WTC11 (cell line): ENCODE measurements at regions of chr16 and their contacts with region 1.

Region 1: DNA sequence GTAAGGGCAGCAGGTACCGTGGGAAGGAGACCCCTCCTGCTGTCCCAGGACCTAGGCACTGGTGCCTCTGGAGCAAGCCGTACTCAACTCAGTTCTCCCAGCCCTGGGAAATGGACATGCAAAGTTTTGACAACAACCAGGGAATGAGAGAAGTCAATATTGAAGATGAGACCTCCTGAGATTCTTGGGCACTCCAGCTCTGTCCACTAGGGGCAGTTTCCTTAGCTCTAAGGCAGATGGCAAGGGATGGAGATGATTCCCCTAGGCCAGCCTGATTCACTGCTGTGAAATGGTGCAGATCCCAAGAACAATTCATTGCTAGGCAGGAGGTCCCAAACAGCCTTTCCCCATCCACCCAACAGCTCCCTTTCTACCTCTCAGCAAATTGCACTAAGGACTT is 20.6 kb upstream of the SDR42E2 start:
- DNase-seq: peak; percentile 55
- ATAC-seq: peak; percentile 95
- H3K4me3 Mint-ChIP-seq: no peak overlapping the region
- H3K27ac Mint-ChIP-seq: no peak overlapping the region
- H3K4me1 Mint-ChIP-seq: peaks cover 10% of the 10 kb centered on the region; the same call in 1 of the 2 replicates
- H3K27me3 Mint-ChIP-seq: no peaks in the 10 kb centered on the region
- CTCF ChIP-seq: peak; percentile 58

Region 2: DNA sequence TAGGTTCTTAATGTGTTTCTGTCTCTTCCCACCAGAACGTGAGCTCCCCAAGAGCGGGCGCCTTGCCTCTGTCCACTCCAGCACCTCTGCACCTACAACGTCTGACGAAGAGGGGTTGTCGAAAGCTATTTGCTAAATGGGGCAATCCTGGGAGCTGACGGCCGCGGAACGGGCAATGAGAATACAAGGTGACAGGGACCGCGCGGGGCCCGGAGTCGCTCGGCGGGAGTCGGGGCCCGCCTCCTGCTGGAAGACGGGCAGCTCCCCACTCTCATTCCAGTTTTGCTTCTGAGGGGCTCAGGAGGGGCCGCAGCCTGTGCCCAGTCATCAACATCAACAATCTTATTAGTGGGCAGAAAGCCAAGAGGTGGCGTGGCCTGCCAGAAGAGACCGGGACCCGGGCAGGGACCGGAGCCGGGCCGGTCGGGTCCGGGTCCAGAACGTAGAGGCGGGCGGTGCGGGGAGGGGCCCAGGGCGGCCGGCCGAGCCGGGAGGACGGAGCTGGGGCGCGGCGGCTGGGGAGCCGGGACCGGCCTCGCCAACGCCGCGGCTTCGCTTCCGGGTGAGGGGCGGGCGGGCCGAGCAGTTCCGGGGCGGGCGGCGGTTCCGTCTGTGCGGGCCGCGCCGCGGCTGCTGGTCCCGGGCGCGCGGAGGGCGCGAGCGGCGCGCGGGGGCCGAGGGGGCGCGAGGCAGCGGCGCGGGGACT is 134.1 kb before region 1 on chr16 and contains the start of gene MOSMO:
- CTCF ChIA-PET with region 1: interaction called, 14 read pairs
- POLR2A ChIA-PET with region 1: no interaction called
- DNase-seq: peak; percentile 66
- ATAC-seq: peak; percentile 82
- H3K4me3 Mint-ChIP-seq: peak within 1 kb of the TSS; percentile 90
- H3K27ac Mint-ChIP-seq: peak within 1 kb of the TSS; percentile 21; the same call in 1 of the 2 replicates
- H3K4me1 Mint-ChIP-seq: peaks cover 12% of the 10 kb centered on the region
- H3K27me3 Mint-ChIP-seq: peaks cover 13% of the 10 kb centered on the region
- CTCF ChIP-seq: no peak
- total RNA-seq, gene MOSMO: 10.7 to 11.6 TPM (median 10.7 TPM) in 3 replicates

Region 3: DNA sequence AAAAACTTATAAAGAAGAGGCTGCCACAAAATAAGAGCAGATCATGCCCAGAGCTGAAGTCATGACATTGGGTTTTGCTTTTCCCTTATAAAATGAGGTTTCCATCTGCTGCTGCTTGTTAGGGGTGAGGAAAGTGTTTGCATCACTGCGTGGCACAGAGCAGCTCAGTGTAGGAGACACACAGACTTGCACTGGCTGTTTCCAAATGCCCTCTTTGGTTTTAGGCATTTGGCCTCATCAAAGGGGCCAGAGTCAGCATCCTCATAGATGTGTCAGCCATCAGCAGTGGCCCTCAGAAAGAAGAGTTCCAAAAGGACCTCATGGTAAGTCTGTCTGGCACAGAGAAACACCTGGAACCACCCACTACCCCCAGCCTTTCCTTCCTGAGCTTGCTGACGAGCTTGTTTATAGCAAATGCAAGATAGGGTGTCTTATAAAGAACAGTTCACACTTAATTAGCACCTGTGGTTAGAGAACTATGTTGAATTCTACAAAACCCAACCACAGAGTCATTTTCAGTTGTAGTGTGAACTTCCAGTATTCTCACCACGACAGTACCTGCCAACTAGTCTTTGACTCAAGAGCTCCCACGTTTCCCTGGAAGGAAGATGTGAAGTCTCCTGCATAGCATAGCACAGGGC is 32.4 kb before region 1 on chr16:
- CTCF ChIA-PET with region 1: interaction called, 15 read pairs
- POLR2A ChIA-PET with region 1: no interaction called
- DNase-seq: no peak
- ATAC-seq: no peak
- H3K4me3 Mint-ChIP-seq: no peak overlapping the region
- H3K27ac Mint-ChIP-seq: no peak overlapping the region
- H3K4me1 Mint-ChIP-seq: peaks cover 5% of the 10 kb centered on the region
- H3K27me3 Mint-ChIP-seq: peaks cover 7% of the 10 kb centered on the region; the same call in 1 of the 2 replicates
- CTCF ChIP-seq: no peak

Region 4: DNA sequence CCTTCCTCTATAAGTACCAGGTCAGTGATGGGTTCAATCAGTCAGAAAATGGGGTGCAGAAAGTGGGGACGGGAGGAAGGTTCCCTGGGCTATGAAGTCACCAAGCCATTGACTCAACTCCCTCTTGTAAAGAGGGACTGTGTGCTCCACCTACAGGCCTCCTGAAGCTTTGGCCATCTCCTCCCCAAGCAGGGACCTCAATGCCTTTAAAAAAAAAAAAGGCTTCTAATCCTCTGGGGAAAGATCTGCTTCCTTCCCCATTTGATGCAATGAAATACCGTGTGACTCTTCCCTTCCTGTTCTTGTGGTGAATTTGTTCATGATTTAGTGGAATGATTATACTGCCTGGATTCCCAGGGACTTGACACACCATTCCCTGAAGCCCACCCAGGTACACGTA is 18.6 kb before region 1 on chr16:
- CTCF ChIA-PET with region 1: interaction called, 13 read pairs
- POLR2A ChIA-PET with region 1: no interaction called
- DNase-seq: no peak
- ATAC-seq: peak; percentile 81
- H3K4me3 Mint-ChIP-seq: no peak overlapping the region
- H3K27ac Mint-ChIP-seq: no peak overlapping the region
- H3K4me1 Mint-ChIP-seq: no peaks in the 10 kb centered on the region
- H3K27me3 Mint-ChIP-seq: peaks cover 6% of the 10 kb centered on the region; the same call in 1 of the 2 replicates
- CTCF ChIP-seq: no peak

Region 5: DNA sequence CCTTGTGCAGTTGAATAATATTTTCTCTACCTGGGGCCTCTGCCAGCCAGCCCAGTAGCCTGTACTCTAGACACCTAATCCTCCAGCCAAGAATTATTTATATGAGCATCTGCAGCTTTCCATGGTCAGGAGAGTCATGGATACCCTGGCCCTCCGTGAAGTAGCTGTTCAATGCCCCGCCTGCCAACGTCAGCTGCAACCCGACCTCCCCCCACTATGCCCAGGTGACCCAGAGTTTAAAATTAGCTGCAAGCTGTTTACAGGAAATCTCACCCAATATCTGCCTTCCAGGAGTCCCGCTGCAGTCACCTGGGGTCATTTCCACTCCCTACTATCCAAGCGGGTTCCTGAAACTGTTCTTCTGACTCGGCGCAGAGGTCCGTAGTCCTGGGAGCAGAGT is 32.9 kb after region 1 on chr16:
- CTCF ChIA-PET with region 1: interaction called, 16 read pairs
- POLR2A ChIA-PET with region 1: no interaction called
- DNase-seq: no peak
- ATAC-seq: no peak
- H3K4me3 Mint-ChIP-seq: no peak overlapping the region
- H3K27ac Mint-ChIP-seq: no peak overlapping the region
- H3K4me1 Mint-ChIP-seq: no peaks in the 10 kb centered on the region
- H3K27me3 Mint-ChIP-seq: no peaks in the 10 kb centered on the region
- CTCF ChIP-seq: no peak

Region 6: DNA sequence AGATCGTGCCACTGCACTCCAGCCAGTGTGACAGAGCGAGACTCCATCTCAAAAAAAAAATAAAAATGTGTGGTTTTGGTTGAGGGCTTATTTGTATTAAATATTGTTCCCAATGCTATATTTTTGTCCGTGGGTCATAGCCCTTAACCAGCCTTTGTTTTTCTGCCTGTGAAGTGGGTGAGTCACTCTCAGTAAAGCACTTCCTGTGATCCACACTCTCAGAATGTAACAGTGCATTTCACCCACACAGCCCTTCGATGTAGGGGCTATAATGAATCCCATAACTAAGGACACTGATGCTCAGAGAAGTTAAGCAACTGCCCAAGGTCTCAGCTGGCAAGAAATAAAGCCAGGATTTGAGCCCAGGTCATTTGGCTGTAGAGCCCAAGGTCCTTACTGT is 120.7 kb after region 1 on chr16:
- CTCF ChIA-PET with region 1: no interaction called
- POLR2A ChIA-PET with region 1: no interaction called
- DNase-seq: no peak
- ATAC-seq: no peak
- H3K4me3 Mint-ChIP-seq: no peak overlapping the region
- H3K27ac Mint-ChIP-seq: no peak overlapping the region
- H3K4me1 Mint-ChIP-seq: no peaks in the 10 kb centered on the region
- H3K27me3 Mint-ChIP-seq: no peaks in the 10 kb centered on the region
- CTCF ChIP-seq: no peak